ENCODE measurements at regions of chr9 and their contacts with region 1.

Region 1: GRCh38 chr9:89021154-89021803 is 30.0 kb downstream of the S1PR3 start:
- DNase-seq: peak; percentile 82 to 85
- H3K4me3 ChIP-seq: peak overlapping the region; percentile 12; the same call in 1 of the 2 replicates
- H3K27ac ChIP-seq: peak overlapping the region; percentile 70
- H3K4me1 ChIP-seq: peaks cover 42% of the 10 kb centered on the region
- H3K27me3 ChIP-seq: no peaks in the 10 kb centered on the region
- CTCF ChIP-seq: no peak

Region 2: DNA sequence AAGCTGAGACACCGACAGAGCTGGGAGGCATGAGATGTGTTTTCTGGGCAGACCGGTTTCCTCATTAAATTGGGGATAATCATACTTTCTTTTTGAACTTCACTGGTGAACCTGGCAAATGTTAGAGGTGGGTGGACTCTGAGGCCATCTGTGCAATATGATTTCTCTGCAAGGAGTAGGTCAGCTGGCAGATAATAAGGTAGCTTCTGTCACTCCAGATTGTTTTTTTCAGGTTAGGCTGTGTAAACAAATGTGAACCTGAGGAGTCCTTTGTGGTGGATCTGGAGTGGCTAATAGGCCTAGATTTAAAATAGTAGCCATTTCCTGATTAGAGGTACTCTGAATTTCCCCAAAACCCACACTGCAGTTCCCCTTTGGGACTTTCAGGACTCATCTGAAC is 105.3 kb before region 1 on chr9:
- CTCF ChIA-PET with region 1: no interaction called
- POLR2A ChIA-PET with region 1: no interaction called
- intact Hi-C with region 1: no loop called
- DNase-seq: no peak
- H3K4me3 ChIP-seq: no peak overlapping the region
- H3K27ac ChIP-seq: no peak overlapping the region
- H3K4me1 ChIP-seq: peaks cover 10% of the 10 kb centered on the region
- H3K27me3 ChIP-seq: no peaks in the 10 kb centered on the region
- CTCF ChIP-seq: no peak

Region 3: DNA sequence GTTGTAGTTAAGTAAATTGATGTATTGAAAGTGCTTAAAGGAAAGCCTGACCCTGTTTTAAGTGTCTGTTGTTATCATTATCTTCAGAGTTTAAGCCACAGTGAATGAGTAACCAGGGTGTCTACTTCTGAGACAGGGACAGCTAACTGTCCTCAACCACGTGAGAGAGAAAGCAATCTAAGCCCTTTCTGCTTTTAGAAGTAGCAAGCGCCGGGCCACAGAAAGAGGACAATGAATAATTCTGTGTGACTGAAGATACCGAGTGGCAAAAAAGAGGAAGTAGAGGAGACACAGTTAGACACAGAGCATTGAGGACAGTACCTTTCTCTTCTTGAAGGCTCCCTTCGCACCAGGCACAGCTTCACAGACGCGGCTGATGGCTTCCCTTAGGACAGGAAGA is 56.2 kb after region 1 on chr9:
- CTCF ChIA-PET with region 1: no interaction called
- POLR2A ChIA-PET with region 1: interaction called, 11 read pairs
- intact Hi-C with region 1: no loop called
- DNase-seq: no peak
- H3K4me3 ChIP-seq: no peak overlapping the region
- H3K27ac ChIP-seq: no peak overlapping the region
- H3K4me1 ChIP-seq: no peaks in the 10 kb centered on the region
- H3K27me3 ChIP-seq: no peaks in the 10 kb centered on the region
- CTCF ChIP-seq: no peak

Region 4: GRCh38 chr9:89154651-89155336 is 133.5 kb after region 1 on chr9:
- CTCF ChIA-PET with region 1: no interaction called
- POLR2A ChIA-PET with region 1: interaction called, 3 read pairs
- intact Hi-C with region 1: loop called (anchors 5 kb)
- DNase-seq: peak; percentile 43 to 82
- H3K4me3 ChIP-seq: no peak overlapping the region
- H3K27ac ChIP-seq: peak overlapping the region; percentile 87
- H3K4me1 ChIP-seq: peaks cover 25% of the 10 kb centered on the region
- H3K27me3 ChIP-seq: no peaks in the 10 kb centered on the region
- CTCF ChIP-seq: no peak

Region 5: DNA sequence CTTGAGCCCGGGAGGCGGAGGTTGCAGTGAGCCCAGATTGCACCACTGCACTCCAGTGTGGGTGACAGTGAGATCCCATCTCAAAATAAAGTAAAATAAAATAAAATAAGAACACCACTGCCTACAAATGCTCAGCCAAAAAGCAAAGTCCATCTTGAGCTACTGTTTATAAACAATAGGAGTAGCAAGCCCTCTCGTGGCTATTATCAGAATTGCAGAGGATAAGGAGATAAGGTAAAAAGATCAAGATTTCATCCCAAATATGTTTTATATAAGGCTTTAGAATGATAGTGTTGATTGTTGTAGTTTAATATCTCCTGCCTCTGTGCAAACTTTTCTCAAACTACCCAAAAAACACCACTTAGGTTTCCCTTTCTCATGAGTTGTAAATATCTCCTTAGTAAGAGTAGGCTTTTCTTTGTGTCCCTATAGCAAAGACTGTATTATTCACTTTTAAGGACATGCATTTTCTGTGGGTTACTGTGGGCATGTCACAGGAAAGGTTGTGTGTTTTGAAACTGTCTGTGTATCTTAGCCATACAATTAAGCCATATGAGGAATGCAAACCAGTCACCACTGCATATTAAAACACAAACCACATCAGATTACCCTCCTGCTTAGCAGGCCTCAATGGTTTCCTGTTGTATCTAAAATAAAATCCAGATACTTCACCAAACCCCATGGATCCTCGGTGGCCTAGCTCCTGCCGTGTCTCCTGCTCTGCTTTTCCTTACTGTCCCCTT is 257.9 kb after region 1 on chr9:
- CTCF ChIA-PET with region 1: no interaction called
- POLR2A ChIA-PET with region 1: no interaction called
- intact Hi-C with region 1: loop called (anchors 5 kb)
- DNase-seq: no peak
- H3K4me3 ChIP-seq: no peak overlapping the region
- H3K27ac ChIP-seq: no peak overlapping the region
- H3K4me1 ChIP-seq: no peaks in the 10 kb centered on the region
- H3K27me3 ChIP-seq: no peaks in the 10 kb centered on the region
- CTCF ChIP-seq: peak; percentile 87

Region 6: DNA sequence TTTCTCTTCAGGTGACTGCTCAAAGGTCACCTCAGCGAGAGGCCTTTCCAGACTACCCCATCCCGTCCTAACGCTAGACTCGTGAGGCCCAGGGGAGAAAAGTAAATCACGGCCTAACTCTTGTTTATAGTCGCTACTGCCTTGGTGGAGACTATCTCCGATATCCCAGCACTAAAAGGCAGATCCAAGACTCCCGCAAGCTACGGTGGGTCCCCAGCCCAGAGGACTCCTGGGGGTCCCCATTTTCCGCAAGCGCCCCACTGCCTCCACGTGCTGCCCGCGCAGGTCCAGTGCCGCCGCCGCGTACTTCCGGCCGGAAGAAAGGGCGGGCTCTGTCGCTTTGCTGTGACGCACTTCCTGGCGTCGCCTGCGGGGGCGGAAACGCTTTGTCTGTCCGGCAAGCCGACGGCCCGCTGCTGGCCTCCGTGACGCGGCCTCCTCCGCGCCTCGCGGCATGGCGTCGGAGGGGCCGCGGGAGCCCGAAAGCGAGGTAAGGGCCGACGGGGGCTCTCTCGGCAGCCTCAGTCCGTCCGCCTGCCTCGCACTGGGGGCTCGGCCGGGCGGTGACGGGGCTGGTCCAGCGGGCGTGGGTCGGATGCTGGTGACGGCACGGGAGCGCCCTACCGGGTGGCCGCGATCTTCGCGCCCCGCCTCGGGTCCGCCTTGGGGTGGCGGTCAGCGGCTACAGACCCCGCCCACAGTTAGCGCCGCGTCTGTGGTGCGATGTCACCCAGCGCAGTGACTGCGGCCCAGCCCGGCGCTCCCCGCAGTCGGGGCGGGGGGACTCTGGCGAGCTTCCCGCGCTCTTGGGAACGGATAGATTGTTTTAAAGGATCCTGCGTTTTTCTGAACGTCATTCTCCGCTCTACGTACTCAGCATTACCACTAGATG is 297.1 kb after region 1 on chr9 and contains the start of gene SECISBP2:
- CTCF ChIA-PET with region 1: no interaction called
- POLR2A ChIA-PET with region 1: no interaction called
- intact Hi-C with region 1: loop called (anchors 2 kb)
- DNase-seq: peak; percentile 89 to 99
- H3K4me3 ChIP-seq: peak within 1 kb of the TSS; percentile 72
- H3K27ac ChIP-seq: peak within 1 kb of the TSS; percentile 93
- H3K4me1 ChIP-seq: peaks cover 54% of the 10 kb centered on the region
- H3K27me3 ChIP-seq: no peaks in the 10 kb centered on the region
- CTCF ChIP-seq: peak; percentile 74
- total RNA-seq, gene SECISBP2: 33.3 and 41.4 TPM in 2 replicates